Activated T-helper 2 cell treated with anti-CD3 and anti-CD28 coated beads, Interferon-gamma antibody, Interleukin-2, Interleukin-4, amounts not matched to agents 10 μg/mL and 5 μg/mL and 100 μg/mL, durations not matched to agents 14 hours and 24 hours and 36 hours (primary cell): ENCODE measurements at regions of chr5 and their contacts with region 1.

Region 1: DNA sequence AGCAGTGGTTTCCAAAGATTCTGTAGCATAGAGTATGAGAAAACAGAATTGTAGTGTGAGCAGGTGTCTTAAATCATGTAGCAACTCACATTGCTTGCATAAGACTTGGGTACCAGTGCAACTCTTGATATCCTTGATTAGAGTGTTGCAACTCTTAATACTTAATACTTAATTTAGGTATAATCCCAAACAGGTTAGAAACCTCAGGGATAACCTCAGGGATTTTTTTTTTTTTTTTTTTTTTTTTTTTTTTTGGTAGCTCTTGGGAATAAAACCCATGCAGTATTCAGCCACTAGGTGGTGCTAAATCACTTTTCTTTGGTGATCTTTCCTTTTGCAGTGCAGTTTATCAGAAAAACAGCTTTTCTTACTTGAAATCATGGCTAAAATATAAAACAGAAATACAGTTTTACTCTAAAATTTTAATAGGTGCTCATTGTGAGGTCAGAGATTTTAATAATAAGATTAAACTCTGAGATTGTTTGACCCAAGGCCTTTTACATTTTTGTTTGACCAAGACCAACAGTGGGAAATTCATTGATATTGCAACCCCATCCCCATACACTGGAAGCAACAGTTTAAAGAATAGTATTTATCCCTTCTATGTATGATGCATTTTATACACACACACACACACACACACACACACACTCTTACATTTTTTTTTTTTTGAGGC is 55.3 kb downstream of the ERAP1 start:
- DNase-seq: no peak
- H3K4me3 Mint-ChIP-seq: no peak overlapping the region
- H3K27ac Mint-ChIP-seq: no peak overlapping the region
- H3K4me1 Mint-ChIP-seq: no peaks in the 10 kb centered on the region
- H3K27me3 Mint-ChIP-seq: no peaks in the 10 kb centered on the region

Region 2: GRCh38 chr5:96614110-96614691 is 138.3 kb before region 1 on chr5:
- intact Hi-C with region 1: loop called (anchors 5 kb)
- DNase-seq: no peak
- H3K4me3 Mint-ChIP-seq: no peak overlapping the region
- H3K27ac Mint-ChIP-seq: no peak overlapping the region
- H3K4me1 Mint-ChIP-seq: peaks cover 6% of the 10 kb centered on the region
- H3K27me3 Mint-ChIP-seq: peaks cover 58% of the 10 kb centered on the region

Region 3: DNA sequence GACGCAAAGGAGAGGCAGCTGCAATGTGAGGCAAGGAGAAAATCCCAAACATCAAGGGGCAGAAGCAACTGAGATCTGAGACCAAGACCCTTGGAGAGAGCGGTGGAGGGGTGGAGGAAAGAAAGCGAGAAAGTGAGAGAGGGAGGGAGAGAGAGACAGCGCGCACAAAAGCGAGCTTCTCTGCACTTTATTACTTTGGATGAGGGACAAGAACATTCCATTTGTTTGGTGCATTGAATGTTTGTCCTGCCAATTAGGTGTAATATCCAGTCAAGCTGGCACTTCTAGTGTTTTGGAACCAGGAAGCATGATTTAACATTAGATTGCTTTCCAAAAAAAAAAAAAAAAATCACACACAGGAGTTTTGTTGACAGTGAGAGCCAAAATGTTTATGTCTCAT is 88.9 kb before region 1 on chr5:
- intact Hi-C with region 1: no loop called
- DNase-seq: no peak
- H3K4me3 Mint-ChIP-seq: peak overlapping the region; percentile 90
- H3K27ac Mint-ChIP-seq: no peak overlapping the region
- H3K4me1 Mint-ChIP-seq: peaks cover 62% of the 10 kb centered on the region
- H3K27me3 Mint-ChIP-seq: peaks cover 22% of the 10 kb centered on the region

Region 4: DNA sequence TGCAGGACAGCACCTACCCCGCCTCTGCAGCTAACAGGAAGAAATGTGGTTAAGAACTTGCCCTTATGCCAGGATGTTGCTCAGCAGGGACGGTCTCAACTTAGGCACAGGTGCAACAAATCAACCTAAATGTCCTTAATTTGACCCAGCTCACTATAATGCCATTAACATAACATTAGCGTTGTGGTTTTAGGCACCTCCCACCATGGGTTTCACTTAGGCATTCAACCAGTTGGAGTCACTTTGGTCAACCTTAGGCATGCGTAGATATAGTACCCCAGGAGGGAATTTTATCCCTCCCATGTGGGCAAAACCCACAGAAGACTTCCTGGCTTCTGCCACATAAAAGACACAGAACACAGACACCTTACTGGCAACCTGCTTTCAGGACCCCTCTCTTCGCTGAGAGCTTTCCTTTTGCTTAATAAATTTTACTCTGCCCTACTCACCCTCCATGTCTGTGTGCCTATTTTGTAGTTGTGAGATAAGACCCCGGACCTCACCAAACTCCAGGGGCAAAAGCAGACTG is 64.0 kb after region 1 on chr5:
- intact Hi-C with region 1: no loop called
- DNase-seq: peak; percentile 44
- H3K4me3 Mint-ChIP-seq: peak overlapping the region; percentile 77
- H3K27ac Mint-ChIP-seq: peak overlapping the region; percentile 91
- H3K4me1 Mint-ChIP-seq: peaks cover 55% of the 10 kb centered on the region
- H3K27me3 Mint-ChIP-seq: no peaks in the 10 kb centered on the region

Region 5: DNA sequence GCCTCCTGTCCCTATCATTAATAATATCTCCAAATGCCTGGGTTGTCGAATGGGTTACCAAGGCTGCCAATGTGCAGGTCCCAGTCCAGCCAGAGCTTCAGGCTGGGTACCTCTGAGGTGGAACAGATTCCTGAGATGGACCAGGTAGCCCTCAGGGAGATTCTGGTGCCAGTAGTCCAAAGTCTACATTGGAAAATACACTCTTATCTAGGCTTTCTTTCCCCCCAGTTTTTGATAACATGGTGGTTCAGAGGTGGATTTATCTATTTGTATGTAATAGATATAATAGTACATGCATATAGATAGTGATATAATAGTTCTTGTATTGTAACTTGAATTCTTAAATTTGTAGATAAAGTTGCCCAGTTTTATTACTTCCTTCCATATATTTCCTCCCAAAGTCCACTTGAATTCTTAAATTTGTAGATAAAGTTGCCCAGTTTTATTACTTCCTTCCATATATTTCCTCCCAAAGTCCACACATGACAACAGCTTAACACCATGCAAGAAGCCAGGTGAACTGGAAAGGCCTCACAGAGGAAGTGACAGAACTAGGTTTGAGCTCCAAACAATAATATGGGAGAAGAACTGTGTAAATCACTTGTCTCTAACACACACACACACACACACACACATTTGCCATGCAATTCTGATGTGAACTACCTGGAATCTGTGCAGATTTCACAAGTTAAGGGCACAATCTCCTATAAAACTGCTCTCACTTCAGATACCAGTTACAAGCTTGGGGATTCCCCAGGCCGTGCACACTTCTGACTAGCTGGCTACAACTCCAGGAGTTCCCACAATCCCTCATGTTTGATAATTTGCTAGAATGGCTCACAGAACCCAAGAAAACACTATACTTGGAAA is 86.0 kb after region 1 on chr5:
- intact Hi-C with region 1: no loop called
- DNase-seq: no peak
- H3K4me3 Mint-ChIP-seq: no peak overlapping the region
- H3K27ac Mint-ChIP-seq: no peak overlapping the region
- H3K4me1 Mint-ChIP-seq: peaks cover 9% of the 10 kb centered on the region
- H3K27me3 Mint-ChIP-seq: peaks cover 4% of the 10 kb centered on the region

Region 6: GRCh38 chr5:96868603-96869371 is 116.3 kb after region 1 on chr5:
- intact Hi-C with region 1: loop called (anchors 5 kb)
- DNase-seq: no peak
- H3K4me3 Mint-ChIP-seq: no peak overlapping the region
- H3K27ac Mint-ChIP-seq: no peak overlapping the region
- H3K4me1 Mint-ChIP-seq: peaks cover 54% of the 10 kb centered on the region
- H3K27me3 Mint-ChIP-seq: no peaks in the 10 kb centered on the region

Region 7: DNA sequence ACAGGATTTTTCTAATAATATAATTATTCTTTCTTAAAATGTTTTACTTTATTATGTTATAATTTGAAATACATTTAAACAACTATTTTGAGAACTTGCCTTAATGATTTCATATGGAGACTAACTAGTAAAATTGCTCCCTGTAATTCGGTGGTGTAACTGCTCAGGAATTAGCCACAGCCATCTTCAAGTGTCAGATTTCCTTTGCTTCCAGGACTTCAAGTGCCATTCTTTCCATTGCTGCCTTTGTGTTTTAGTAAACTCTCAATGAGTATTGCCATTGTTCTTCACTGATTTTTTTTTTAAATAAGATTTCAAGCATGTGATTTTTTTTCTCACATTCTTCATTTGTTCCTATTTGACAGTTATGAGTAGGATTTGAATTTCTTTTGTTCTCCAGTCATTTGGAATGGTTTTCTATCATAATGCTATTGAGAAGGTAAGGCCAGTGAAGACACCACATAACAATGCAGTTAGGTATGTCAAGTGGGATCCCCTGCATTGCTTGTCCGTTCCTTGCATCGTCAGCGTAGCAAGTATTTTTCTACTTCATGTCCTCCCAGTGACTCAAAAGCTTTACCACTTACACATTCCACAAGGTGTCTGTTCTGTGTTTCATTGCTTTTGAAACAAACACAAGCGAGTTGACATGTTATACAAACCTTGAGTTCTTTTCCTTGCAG is 267.1 kb after region 1 on chr5:
- intact Hi-C with region 1: loop called (anchors 10 kb)
- DNase-seq: no peak
- H3K4me3 Mint-ChIP-seq: no peak overlapping the region
- H3K27ac Mint-ChIP-seq: no peak overlapping the region
- H3K4me1 Mint-ChIP-seq: peaks cover 22% of the 10 kb centered on the region
- H3K27me3 Mint-ChIP-seq: no peaks in the 10 kb centered on the region